Heart right ventricle (tissue), 16 donors: ENCODE measurements at regions of chr5 and their contacts with region 1.

Region 1: GRCh38 chr5:139804800-139805397 is 9.3 kb downstream of the PSD2 start:
- DNase-seq: no peak
- ATAC-seq: no peak
- H3K4me3 ChIP-seq: no peak overlapping the region
- H3K27ac ChIP-seq: no peak overlapping the region
- H3K4me1 ChIP-seq: no peaks in the 10 kb centered on the region
- H3K27me3 ChIP-seq: peaks cover 0 to 52% (median 34%) of the 10 kb centered on the region in 7 donors
- CTCF ChIP-seq: no peak

Region 2: DNA sequence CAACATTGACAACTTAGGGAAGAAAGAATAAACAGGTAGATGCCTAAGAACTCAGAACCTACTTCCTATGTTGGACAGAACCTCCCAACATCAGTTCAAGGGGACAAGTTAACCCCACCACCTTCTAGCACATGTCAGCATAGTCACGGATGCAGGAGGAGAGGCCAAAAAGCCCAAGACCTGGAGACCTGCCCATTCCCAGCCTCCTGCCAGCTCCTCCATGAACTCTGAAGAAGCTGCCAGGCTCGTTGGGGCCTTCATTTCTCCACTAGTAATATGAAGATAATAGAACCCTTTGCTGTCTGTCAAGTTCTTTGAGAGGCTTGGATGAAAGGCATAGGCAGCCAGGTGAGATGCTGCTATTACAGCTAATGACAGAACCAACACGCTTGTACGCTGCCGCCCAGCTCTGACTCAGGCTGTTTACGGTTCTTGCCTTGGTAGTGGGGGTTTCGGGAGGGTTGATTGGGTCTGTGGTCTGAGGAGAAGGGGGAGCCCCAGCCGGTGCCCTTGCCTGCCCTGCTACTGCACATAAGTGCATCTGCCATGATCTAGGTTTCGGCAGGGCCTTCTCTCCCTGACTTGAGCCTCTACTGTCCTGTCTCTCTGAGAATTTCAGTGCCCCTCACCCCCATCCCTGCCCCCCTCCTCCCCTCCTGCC is 156.0 kb after region 1 on chr5:
- intact Hi-C with region 1: loop called in 2 of 10 experiments (anchors 5 kb)
- DNase-seq: no peak
- ATAC-seq: no peak
- H3K4me3 ChIP-seq: no peak overlapping the region
- H3K27ac ChIP-seq: no peak overlapping the region
- H3K4me1 ChIP-seq: peaks cover 0 to 33% (median 7%) of the 10 kb centered on the region in 9 donors
- H3K27me3 ChIP-seq: no peaks in the 10 kb centered on the region
- CTCF ChIP-seq: no peak